ENCODE measurements at regions of chr7 and their contacts with region 1.

Region 1: GRCh38 chr7:88546808-88547207 is 212.7 kb upstream of the ZNF804B start:
- DNase-seq: peak; percentile 39
- H3K4me3 ChIP-seq: no peak overlapping the region
- H3K27ac ChIP-seq: no peak overlapping the region
- H3K4me1 ChIP-seq: no peaks in the 10 kb centered on the region
- H3K27me3 ChIP-seq: no peaks in the 10 kb centered on the region
- CTCF ChIP-seq: peak; percentile 57 to 81

Region 2: DNA sequence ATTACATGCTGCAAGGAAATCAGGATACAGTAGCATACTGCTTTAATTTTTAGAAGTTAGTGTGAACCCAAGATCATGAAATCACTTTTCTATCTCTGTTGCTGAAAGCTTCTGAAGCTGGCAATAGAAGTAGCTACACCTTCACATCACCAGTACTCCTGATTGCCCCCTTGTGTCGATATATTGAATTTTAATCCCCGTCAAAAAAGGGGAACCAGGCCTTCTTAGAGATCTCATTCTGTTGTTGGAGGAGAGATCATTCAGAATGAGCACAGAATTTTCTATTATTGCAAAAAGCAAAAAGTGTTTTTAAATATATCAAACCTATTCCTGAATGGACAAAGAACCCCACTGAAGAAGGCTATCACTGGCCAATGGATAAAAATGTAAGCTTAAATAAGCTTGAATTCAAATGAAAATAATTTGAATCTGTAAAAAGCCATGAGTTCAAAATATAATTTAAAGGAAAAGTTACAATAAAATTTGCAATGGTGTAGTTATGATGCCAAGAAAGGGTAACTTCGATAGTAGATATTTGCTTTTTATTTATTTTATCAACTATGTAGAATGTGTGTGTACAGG is 288.4 kb after region 1 on chr7:
- CTCF ChIA-PET with region 1: no interaction called
- dilution Hi-C with region 1: no loop called
- in situ Hi-C with region 1: no loop called
- intact Hi-C with region 1: loop called (anchors 1 kb)
- DNase-seq: peak; percentile 26
- H3K4me3 ChIP-seq: no peak overlapping the region
- H3K27ac ChIP-seq: no peak overlapping the region
- H3K4me1 ChIP-seq: no peaks in the 10 kb centered on the region
- H3K27me3 ChIP-seq: no peaks in the 10 kb centered on the region
- CTCF ChIP-seq: peak; percentile 55 to 61

Region 3: GRCh38 chr7:89160107-89160506 is 613.3 kb after region 1 on chr7:
- CTCF ChIA-PET with region 1: no interaction called
- dilution Hi-C with region 1: no loop called
- in situ Hi-C with region 1: no loop called
- intact Hi-C with region 1: no loop called
- DNase-seq: no peak
- H3K4me3 ChIP-seq: no peak overlapping the region
- H3K27ac ChIP-seq: no peak overlapping the region
- H3K4me1 ChIP-seq: no peaks in the 10 kb centered on the region
- H3K27me3 ChIP-seq: no peaks in the 10 kb centered on the region
- CTCF ChIP-seq: no peak

Region 4: DNA sequence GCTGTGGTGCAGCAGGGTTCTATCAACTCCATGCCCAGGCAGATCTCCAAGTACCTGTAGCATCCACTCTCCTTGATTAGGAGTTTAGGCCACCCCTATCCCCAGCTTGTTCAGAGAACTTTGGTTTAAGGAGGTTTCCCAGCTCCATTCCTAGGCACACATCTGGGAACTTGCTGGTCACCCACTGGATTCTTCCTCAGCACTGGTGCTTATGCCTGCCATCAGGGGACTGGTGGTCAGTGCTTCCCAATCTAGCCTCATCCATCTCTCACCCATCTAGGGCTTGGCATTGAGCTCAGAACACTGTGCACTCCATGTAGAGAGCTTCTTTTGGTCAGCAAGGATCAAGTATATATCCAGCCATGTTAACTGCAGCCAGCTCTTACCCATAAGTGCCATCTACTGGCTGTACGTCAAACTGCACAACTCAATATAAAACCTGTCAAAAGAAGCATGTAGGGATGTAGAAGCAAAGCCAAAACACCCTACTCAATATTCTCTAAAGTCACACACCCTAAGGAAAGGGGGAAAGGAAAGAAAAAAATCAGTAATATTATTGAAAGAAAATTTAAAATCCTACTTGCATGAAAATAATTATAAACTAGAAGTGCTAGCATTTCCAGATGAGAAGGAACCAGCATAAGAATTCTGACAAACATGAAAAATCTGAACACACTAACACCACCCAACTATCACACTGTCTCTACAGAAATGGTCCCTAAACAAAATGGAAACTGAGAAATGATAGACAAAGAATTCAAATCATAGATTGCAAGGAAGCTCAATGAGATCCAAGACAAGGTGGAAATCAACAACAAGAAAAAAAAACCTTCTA is 1076.2 kb after region 1 on chr7:
- CTCF ChIA-PET with region 1: no interaction called
- dilution Hi-C with region 1: no loop called
- in situ Hi-C with region 1: loop called in 1 of 2 experiments (anchors 25 kb)
- intact Hi-C with region 1: loop called (anchors 2 kb)
- DNase-seq: peak; percentile 35
- H3K4me3 ChIP-seq: no peak overlapping the region
- H3K27ac ChIP-seq: no peak overlapping the region
- H3K4me1 ChIP-seq: no peaks in the 10 kb centered on the region
- H3K27me3 ChIP-seq: no peaks in the 10 kb centered on the region
- CTCF ChIP-seq: peak; percentile 73 to 82

Region 5: GRCh38 chr7:90119178-90119971 is 1572.6 kb after region 1 on chr7:
- CTCF ChIA-PET with region 1: no interaction called
- dilution Hi-C with region 1: no loop called
- in situ Hi-C with region 1: loop called in 1 of 2 experiments (anchors 25 kb)
- intact Hi-C with region 1: no loop called
- DNase-seq: peak; percentile 10
- H3K4me3 ChIP-seq: peak overlapping the region in 2 of 3 experiments; percentile 4 to 35
- H3K27ac ChIP-seq: no peak overlapping the region
- H3K4me1 ChIP-seq: peaks cover 4% of the 10 kb centered on the region
- H3K27me3 ChIP-seq: peaks cover 7% of the 10 kb centered on the region
- CTCF ChIP-seq: no peak

Region 6: GRCh38 chr7:90262438-90262837 is 1715.6 kb after region 1 on chr7:
- CTCF ChIA-PET with region 1: no interaction called
- dilution Hi-C with region 1: no loop called
- in situ Hi-C with region 1: loop called in 1 of 2 experiments (anchors 25 kb)
- intact Hi-C with region 1: no loop called
- DNase-seq: peak; percentile 21
- H3K4me3 ChIP-seq: no peak overlapping the region
- H3K27ac ChIP-seq: no peak overlapping the region
- H3K4me1 ChIP-seq: no peaks in the 10 kb centered on the region
- H3K27me3 ChIP-seq: no peaks in the 10 kb centered on the region
- CTCF ChIP-seq: peak; percentile 32 to 54

Measured in mammary epithelial cell (primary cell).